ENCODE measurements at regions of chr1 and their contacts with region 1.

Region 1: DNA sequence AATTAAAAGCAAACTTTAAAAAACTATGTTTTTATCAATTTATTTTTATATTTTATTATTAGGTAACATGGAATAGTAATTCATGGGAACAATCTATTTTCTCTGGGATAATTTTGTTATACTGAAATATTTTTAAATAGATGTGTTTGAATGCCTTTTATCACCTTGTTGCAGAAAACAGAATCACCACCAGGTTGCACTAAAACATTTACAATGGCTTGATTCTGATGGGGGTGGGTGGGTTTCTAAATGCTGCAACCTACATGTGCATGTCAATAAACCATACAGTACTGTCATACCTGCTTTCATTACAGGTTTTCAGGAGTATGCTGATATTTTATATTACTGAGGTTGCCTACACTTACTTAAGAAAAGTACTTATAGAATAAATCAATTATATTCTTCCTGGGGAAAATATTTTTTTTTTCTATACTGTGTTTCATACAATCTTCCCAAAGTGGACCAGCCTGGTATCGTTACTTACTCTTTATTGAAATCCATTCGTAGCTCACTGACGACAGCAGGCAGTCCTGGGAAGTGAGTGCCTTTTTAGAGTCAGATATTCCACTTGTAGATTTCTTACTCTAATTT is 132.8 kb downstream of the PTPRC start:
- DNase-seq: peak; percentile 32 to 44
- H3K4me3 ChIP-seq: no peak overlapping the region
- H3K4me3 Mint-ChIP-seq: no peak overlapping the region
- H3K27ac Mint-ChIP-seq: no peak overlapping the region
- H3K4me1 ChIP-seq: no peaks in the 10 kb centered on the region
- H3K4me1 Mint-ChIP-seq: no peaks in the 10 kb centered on the region
- H3K27me3 ChIP-seq: no peaks in the 10 kb centered on the region
- H3K27me3 Mint-ChIP-seq: no peaks in the 10 kb centered on the region
- CTCF ChIP-seq: peak; percentile 46 to 58

Region 2: GRCh38 chr1:198848649-198849048 is 77.0 kb after region 1 on chr1:
- CTCF ChIA-PET with region 1: no interaction called
- POLR2A ChIA-PET with region 1: no interaction called
- intact Hi-C with region 1: no loop called
- DNase-seq: no peak
- H3K4me3 ChIP-seq: no peak overlapping the region
- H3K4me3 Mint-ChIP-seq: no peak overlapping the region
- H3K27ac Mint-ChIP-seq: no peak overlapping the region
- H3K4me1 ChIP-seq: no peaks in the 10 kb centered on the region
- H3K4me1 Mint-ChIP-seq: no peaks in the 10 kb centered on the region
- H3K27me3 ChIP-seq: no peaks in the 10 kb centered on the region
- H3K27me3 Mint-ChIP-seq: no peaks in the 10 kb centered on the region
- CTCF ChIP-seq: no peak

Region 3: GRCh38 chr1:199046618-199047017 is 275.0 kb after region 1 on chr1:
- CTCF ChIA-PET with region 1: no interaction called
- POLR2A ChIA-PET with region 1: no interaction called
- intact Hi-C with region 1: loop called (anchors 1 kb)
- DNase-seq: no peak
- H3K4me3 ChIP-seq: no peak overlapping the region
- H3K4me3 Mint-ChIP-seq: no peak overlapping the region
- H3K27ac Mint-ChIP-seq: no peak overlapping the region
- H3K4me1 ChIP-seq: no peaks in the 10 kb centered on the region
- H3K4me1 Mint-ChIP-seq: no peaks in the 10 kb centered on the region
- H3K27me3 ChIP-seq: no peaks in the 10 kb centered on the region
- H3K27me3 Mint-ChIP-seq: peaks cover 4% of the 10 kb centered on the region
- CTCF ChIP-seq: no peak

Region 4: DNA sequence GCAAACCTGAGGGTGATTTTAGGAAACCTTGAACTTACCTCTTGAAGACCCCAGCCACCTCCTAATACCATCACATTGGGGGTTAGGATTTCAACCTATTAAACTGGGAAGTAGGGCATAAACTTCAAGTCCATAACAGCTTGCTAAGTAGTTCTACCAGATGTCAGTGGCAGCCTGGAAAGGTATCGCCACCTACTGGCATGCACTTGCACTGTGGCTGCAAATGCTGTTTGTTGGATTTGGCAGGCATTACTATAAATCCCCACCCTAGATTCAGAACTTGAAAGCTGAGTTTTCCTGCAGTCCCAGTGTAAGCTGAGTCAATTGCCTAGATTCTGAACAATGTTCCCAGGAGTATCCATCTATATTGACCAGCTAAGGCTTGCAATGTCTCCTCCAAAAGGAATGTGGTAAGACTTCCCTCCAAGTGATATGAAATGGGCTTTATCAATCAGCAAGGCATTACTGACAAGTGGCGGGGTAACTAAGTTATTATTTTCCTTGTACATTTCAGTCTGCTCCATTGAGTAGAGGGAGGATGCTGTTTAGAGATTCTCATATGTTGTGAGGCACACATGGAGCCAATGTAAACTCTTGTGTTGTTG is 341.7 kb after region 1 on chr1:
- CTCF ChIA-PET with region 1: no interaction called
- POLR2A ChIA-PET with region 1: no interaction called
- intact Hi-C with region 1: loop called (anchors 1 kb)
- DNase-seq: peak; percentile 50 to 59
- H3K4me3 ChIP-seq: no peak overlapping the region
- H3K4me3 Mint-ChIP-seq: no peak overlapping the region
- H3K27ac Mint-ChIP-seq: no peak overlapping the region
- H3K4me1 ChIP-seq: no peaks in the 10 kb centered on the region
- H3K4me1 Mint-ChIP-seq: no peaks in the 10 kb centered on the region
- H3K27me3 ChIP-seq: no peaks in the 10 kb centered on the region
- H3K27me3 Mint-ChIP-seq: peaks cover 3% of the 10 kb centered on the region
- CTCF ChIP-seq: peak; percentile 71 to 81

Region 5: GRCh38 chr1:199243423-199244061 is 471.9 kb after region 1 on chr1:
- CTCF ChIA-PET with region 1: no interaction called
- POLR2A ChIA-PET with region 1: no interaction called
- intact Hi-C with region 1: loop called (anchors 10 kb)
- DNase-seq: peak; percentile 45 to 46
- H3K4me3 ChIP-seq: no peak overlapping the region
- H3K4me3 Mint-ChIP-seq: no peak overlapping the region
- H3K27ac Mint-ChIP-seq: no peak overlapping the region
- H3K4me1 ChIP-seq: no peaks in the 10 kb centered on the region
- H3K4me1 Mint-ChIP-seq: peaks cover 8% of the 10 kb centered on the region
- H3K27me3 ChIP-seq: no peaks in the 10 kb centered on the region
- H3K27me3 Mint-ChIP-seq: peaks cover 4% of the 10 kb centered on the region
- CTCF ChIP-seq: peak; percentile 38 to 42

Region 6: GRCh38 chr1:199463521-199464128 is 692.0 kb after region 1 on chr1:
- CTCF ChIA-PET with region 1: no interaction called
- POLR2A ChIA-PET with region 1: no interaction called
- intact Hi-C with region 1: loop called (anchors 1 kb)
- DNase-seq: peak; percentile 62 to 67
- H3K4me3 ChIP-seq: no peak overlapping the region
- H3K4me3 Mint-ChIP-seq: no peak overlapping the region
- H3K27ac Mint-ChIP-seq: no peak overlapping the region
- H3K4me1 ChIP-seq: no peaks in the 10 kb centered on the region
- H3K4me1 Mint-ChIP-seq: no peaks in the 10 kb centered on the region
- H3K27me3 ChIP-seq: no peaks in the 10 kb centered on the region
- H3K27me3 Mint-ChIP-seq: no peaks in the 10 kb centered on the region
- CTCF ChIP-seq: peak; percentile 53 to 64

Region 7: DNA sequence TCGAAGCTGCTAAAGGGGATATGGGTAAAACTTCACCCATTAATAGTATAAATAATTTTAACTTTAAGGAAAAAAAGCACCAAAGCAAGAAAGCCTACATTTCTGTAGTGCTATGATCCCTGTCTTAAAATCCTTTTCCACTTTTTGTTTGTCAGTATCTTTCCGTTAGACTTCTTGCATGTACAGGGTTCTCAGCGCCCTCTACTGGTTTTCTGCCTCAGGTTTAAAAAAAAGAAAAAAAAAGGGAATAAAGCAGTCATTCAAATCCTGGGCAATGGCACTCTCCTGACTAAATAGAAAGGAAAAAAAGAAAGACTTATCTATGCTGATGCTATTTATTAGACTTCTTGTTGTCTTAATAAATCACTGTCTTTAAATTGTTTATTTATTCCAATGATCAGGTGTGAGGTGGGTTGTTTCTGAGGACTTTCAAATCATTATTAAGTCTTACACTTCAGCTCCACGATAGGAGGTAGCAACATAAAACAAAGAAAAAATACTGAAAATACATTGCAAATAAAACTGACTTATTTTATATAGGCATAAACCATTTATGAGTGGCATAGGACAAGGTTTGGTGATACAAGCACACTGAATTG is 780.4 kb after region 1 on chr1:
- CTCF ChIA-PET with region 1: no interaction called
- POLR2A ChIA-PET with region 1: no interaction called
- intact Hi-C with region 1: loop called (anchors 5 kb)
- DNase-seq: peak in 1 of 2 experiments; percentile 67
- H3K4me3 ChIP-seq: no peak overlapping the region
- H3K4me3 Mint-ChIP-seq: no peak overlapping the region
- H3K27ac Mint-ChIP-seq: no peak overlapping the region
- H3K4me1 ChIP-seq: no peaks in the 10 kb centered on the region
- H3K4me1 Mint-ChIP-seq: no peaks in the 10 kb centered on the region
- H3K27me3 ChIP-seq: no peaks in the 10 kb centered on the region
- H3K27me3 Mint-ChIP-seq: no peaks in the 10 kb centered on the region
- CTCF ChIP-seq: peak; percentile 54 to 75

Measured in Caco-2 (cell line).